ENCODE measurements at regions of chr7 and their contacts with region 1.

Region 1: DNA sequence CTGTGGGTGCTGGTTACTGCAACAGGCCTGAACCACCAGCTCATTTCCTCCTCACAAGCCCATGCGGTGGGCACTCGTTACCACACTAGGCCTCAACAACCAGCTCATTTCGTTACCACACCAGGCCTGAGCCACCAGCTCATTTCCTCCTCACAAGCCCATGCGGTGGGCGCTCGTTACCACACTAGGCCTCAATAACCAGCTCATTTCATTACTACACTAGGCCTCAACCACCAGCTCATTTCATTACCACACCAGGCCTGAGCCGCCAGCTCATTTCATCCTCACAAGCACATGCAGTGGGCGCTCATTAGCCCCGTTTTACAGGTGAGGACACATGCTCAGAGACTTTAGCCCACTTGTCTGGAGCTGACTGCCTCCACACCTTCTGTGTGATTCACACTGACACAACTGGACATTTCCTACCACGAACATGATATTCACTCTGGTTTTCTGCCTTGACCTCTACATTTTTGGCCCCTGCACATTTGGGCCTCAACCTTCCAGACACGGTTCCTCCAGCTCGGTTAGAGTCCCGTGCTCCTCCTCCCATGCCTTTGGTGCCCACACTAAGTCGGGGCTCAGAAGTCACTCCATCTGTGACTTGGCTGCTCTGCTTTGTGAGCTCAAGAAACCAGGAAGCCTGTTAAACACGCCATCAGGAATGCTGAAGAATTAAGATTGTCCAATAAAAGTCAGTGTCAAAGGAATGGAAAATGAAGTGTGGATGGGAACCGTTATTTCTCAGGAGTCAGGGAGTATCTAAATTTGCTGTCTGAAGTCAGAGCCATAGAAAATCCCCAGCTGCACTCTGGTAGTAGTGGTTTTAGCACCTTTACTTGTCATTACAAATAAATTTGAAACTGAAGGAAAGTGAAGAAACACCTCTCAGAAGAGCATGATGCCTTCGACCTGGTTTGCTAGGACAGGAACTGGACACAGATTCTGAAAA is 55.8 kb upstream of the LANCL2 start:
- DNase-seq: no peak
- ATAC-seq: no peak
- H3K4me3 ChIP-seq: no peak overlapping the region
- H3K27ac ChIP-seq: no peak overlapping the region
- H3K4me1 ChIP-seq: peaks cover 3% of the 10 kb centered on the region; the same call in 1 of the 2 replicates
- H3K27me3 ChIP-seq: no peaks in the 10 kb centered on the region
- CTCF ChIP-seq: no peak

Region 2: DNA sequence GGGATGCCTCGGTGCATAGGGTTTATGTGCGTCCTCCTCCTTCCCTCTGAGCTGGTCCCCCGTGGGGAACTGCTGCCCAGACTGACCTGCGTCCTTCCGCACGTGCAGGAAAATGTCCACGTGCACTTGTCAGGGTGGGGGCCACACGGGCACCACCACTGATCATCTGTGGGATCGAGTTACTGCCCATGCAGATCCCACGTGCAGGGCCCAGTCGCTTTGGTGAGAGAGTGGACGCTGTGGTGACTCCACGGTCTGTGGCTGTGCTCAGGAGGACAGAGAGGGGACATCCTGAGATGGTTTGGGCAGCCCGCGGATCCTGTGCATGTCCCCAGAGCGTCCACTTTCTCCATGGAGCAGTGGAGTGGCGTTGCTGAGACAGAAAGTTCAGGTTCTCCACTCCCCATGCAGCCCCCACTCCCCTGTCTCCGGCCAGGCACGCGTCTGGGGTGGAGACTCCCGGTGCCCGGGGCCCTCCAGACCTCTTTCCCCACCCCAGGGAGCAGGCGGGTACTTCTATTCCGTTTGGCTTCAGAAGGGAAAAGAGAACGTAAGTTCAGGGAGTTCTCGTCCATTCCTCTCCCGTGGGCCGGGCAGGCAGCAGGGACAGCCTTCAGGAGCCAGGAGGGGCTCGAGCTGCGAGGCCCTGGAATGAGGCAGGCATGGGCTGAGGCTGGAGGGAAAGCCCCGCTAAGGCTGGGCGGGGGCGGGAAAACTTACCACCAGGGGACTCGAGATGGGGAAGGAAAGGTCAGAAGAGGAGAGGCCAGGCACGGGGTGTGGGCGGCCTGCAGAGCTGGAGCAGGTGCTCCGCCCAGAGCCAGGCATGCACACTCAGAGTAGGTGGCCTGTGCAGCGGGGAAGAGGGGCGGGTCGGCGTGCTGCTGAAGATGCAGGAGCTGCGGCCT is 230.6 kb before region 1 on chr7:
- CTCF ChIA-PET with region 1: no interaction called
- POLR2A ChIA-PET with region 1: no interaction called
- intact Hi-C with region 1: no loop called
- DNase-seq: no peak
- ATAC-seq: no peak
- H3K4me3 ChIP-seq: no peak overlapping the region
- H3K27ac ChIP-seq: no peak overlapping the region
- H3K4me1 ChIP-seq: peaks cover 24% of the 10 kb centered on the region
- H3K27me3 ChIP-seq: no peaks in the 10 kb centered on the region
- CTCF ChIP-seq: no peak

Region 3: GRCh38 chr7:55265836-55266642 is 43.3 kb before region 1 on chr7:
- CTCF ChIA-PET with region 1: no interaction called
- POLR2A ChIA-PET with region 1: no interaction called
- intact Hi-C with region 1: no loop called
- DNase-seq: no peak
- ATAC-seq: no peak
- H3K4me3 ChIP-seq: no peak overlapping the region
- H3K27ac ChIP-seq: no peak overlapping the region
- H3K4me1 ChIP-seq: no peaks in the 10 kb centered on the region
- H3K27me3 ChIP-seq: no peaks in the 10 kb centered on the region
- CTCF ChIP-seq: no peak

Region 4: GRCh38 chr7:55348499-55348898 is 39.2 kb after region 1 on chr7:
- CTCF ChIA-PET with region 1: no interaction called
- POLR2A ChIA-PET with region 1: no interaction called
- intact Hi-C with region 1: loop called (anchors 5 kb)
- DNase-seq: peak; percentile 84
- ATAC-seq: peak; percentile 97
- H3K4me3 ChIP-seq: no peak overlapping the region
- H3K27ac ChIP-seq: no peak overlapping the region
- H3K4me1 ChIP-seq: peaks cover 8% of the 10 kb centered on the region; the same call in 1 of the 2 replicates
- H3K27me3 ChIP-seq: no peaks in the 10 kb centered on the region
- CTCF ChIP-seq: no peak